ENCODE measurements at regions of chr11 and their contacts with region 1.

Region 1: DNA sequence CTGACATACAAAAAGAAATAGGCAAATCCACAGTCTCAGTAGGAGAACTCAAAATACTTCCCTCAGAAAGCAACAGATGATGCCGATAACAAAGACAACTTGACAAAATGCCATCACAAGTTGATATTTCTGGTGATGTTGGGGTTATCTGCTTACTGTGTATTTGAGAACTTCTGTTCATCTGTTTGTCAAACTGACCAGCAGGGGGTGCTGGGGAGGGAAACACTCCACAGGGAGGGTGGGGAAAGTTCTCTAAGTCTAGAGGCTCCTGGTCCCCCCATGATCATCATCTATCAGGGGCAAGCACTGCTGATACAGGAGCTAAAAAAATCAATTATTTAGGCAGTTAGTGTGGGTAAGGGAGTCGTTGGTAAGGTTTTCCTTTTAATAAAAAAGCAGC is 19.2 kb downstream of the GLYATL1 start:
- DNase-seq: no peak
- H3K4me3 ChIP-seq: no peak overlapping the region
- H3K27ac ChIP-seq: no peak overlapping the region
- H3K4me1 ChIP-seq: no peaks in the 10 kb centered on the region
- H3K27me3 ChIP-seq: no peaks in the 10 kb centered on the region
- CTCF ChIP-seq: peak in 2 of 3 donors; percentile 17 to 37
- POLR2A ChIP-seq: no peak

Region 2: DNA sequence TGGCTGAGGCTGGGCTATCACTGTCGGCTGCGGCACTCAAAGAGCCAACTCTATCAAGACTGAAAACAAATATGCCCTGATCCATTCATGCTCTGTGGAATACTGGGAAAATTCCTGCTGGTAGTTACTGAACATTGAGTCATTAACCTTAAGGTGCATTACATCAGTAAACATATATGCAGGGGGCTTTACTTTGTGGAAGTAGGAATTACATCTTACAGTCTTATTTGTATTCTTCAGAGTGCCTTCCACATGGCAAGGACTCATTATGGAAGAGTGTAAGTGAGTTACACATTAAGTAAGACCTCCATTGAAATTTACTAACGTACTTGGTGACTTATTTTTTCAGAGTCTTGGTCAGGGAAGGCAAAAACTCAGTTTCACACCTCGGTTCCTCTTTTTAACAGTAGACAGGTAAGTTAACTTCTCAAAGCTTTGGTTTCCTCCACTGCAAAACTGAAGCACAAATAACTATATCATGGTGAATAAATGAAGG is 455.1 kb before region 1 on chr11:
- intact Hi-C with region 1: no loop called
- DNase-seq: no peak
- H3K4me3 ChIP-seq: no peak overlapping the region
- H3K27ac ChIP-seq: no peak overlapping the region
- H3K4me1 ChIP-seq: no peaks in the 10 kb centered on the region
- H3K27me3 ChIP-seq: no peaks in the 10 kb centered on the region
- CTCF ChIP-seq: no peak
- POLR2A ChIP-seq: no peak

Region 3: GRCh38 chr11:58905721-58906477 is 52.6 kb before region 1 on chr11:
- intact Hi-C with region 1: loop called (anchors 2 kb)
- DNase-seq: peak in 1 of 2 donors; percentile 73
- H3K4me3 ChIP-seq: peak overlapping the region; percentile 38 to 68 (median 52)
- H3K27ac ChIP-seq: peak overlapping the region; percentile 58 to 67
- H3K4me1 ChIP-seq: no peaks in the 10 kb centered on the region
- H3K27me3 ChIP-seq: peaks cover 0 to 10% of the 10 kb centered on the region in 2 donors
- CTCF ChIP-seq: peak in 1 of 3 donors; percentile 33
- POLR2A ChIP-seq: no peak

Measured in breast epithelium (tissue), 4 donors.